ENCODE measurements at regions of chr6 and their contacts with region 1.

Region 1: DNA sequence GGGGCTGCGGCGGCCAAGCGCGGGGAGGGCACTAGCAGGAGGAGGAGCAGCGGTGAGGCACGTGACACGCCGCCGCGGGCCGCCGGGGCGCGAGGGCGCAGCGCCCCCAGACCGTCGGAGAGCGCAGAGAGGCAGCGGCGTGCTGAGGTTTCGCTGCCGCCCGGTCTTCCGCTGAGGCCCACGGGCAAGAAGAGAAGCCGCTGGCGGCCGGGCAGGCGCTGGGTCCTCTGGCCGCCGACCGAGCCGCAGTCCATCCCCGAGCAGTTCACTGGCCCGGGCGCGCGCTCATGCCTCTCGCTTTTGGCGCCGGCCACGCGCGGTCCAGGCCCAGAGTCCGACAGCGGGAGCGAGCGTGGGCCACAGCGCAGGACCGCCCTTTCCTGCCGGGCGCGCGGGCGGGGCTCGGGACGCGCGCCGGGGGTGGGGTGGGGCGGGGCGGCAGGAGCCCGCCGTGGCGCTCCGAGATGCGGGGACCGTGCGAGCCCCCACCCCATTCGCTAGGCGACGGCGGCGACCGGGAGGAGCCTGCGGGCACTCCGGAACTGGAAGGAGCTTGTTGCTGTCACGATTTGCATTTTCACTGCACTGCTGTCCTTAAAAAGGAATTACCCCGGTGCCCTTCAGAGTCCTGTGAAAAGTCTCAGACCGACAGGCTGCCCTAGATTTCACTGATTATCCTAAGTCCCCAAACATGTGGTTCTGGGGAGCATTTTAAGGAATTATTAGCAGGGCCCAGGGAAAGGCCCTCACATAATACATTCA is at the start of gene MCUR1:
- DNase-seq: peak; percentile 94
- CTCF ChIP-seq: peak; percentile 29

Region 2: GRCh38 chr6:13354331-13355042 is 459.9 kb before region 1 on chr6:
- CTCF ChIA-PET with region 1: no interaction called
- POLR2A ChIA-PET with region 1: no interaction called
- DNase-seq: no peak
- CTCF ChIP-seq: no peak

Region 3: GRCh38 chr6:13795041-13795750 is 19.2 kb before region 1 on chr6:
- CTCF ChIA-PET with region 1: interaction called, 47 read pairs
- POLR2A ChIA-PET with region 1: no interaction called
- DNase-seq: peak; percentile 80
- CTCF ChIP-seq: peak; percentile 94

Region 4: DNA sequence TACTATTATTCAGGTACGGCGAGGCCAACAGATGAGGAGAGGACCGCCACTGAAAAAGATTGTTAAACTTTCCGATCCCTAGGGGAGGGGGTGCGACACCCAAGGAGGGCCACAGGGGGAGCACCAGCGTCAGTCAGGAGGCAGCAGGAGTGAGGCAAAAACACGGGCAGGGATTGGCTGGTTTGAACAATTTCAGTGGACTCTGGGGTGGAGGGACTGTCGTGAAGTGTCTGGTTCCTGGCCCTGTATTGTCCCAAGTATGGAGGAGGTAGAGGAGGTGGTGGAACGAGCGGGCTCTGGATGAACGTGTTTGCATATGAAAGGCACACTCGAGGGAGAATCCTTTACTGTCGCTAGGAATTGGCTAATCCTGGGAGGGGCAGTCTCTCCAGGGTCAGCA is 32.5 kb after region 1 on chr6:
- CTCF ChIA-PET with region 1: no interaction called
- POLR2A ChIA-PET with region 1: no interaction called
- DNase-seq: no peak
- CTCF ChIP-seq: no peak

Region 5: GRCh38 chr6:13859871-13860555 is 45.7 kb after region 1 on chr6:
- CTCF ChIA-PET with region 1: no interaction called
- POLR2A ChIA-PET with region 1: no interaction called
- DNase-seq: no peak
- CTCF ChIP-seq: no peak

Region 6: GRCh38 chr6:13885601-13886000 is 71.2 kb after region 1 on chr6:
- CTCF ChIA-PET with region 1: no interaction called
- POLR2A ChIA-PET with region 1: no interaction called
- DNase-seq: no peak
- CTCF ChIP-seq: no peak